MCF 10A (cell line): ENCODE measurements at regions of chr5 and their contacts with region 1.

Region 1: DNA sequence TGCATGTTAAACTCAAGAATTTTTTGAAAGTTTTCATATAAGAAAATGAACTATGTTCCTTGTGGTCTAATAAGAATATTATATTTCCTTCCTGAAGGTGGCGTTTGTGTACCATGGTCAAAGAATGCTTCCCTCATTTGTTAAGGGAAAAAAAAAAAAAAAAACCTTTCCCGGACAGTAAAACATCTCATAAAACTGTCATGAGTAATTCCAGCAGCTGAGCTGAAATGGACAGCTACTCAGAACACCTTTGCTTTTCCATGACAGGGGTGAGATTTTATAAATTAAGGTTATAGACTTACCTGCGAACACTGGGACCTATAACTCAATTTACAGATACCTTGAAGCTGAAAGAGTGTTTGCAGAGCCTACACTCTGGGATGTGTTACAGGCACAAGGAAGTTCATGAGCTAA is 113.2 kb upstream of the RANBP3L start:
- DNase-seq: peak; percentile 68
- H3K4me3 Mint-ChIP-seq: no peak overlapping the region
- H3K27ac Mint-ChIP-seq: no peak overlapping the region
- H3K4me1 Mint-ChIP-seq: peaks cover 17% of the 10 kb centered on the region
- H3K27me3 Mint-ChIP-seq: no peaks in the 10 kb centered on the region
- CTCF ChIP-seq: peak; percentile 47

Region 2: GRCh38 chr5:36444582-36445418 is 29.9 kb after region 1 on chr5:
- CTCF ChIA-PET with region 1: interaction called, 49 read pairs
- POLR2A ChIA-PET with region 1: interaction called, 81 read pairs
- intact Hi-C with region 1: no loop called
- DNase-seq: peak; percentile 73
- H3K4me3 Mint-ChIP-seq: peak overlapping the region; percentile 37
- H3K27ac Mint-ChIP-seq: peak overlapping the region; percentile 84
- H3K4me1 Mint-ChIP-seq: peaks cover 38% of the 10 kb centered on the region
- H3K27me3 Mint-ChIP-seq: no peaks in the 10 kb centered on the region
- CTCF ChIP-seq: no peak

Region 3: GRCh38 chr5:36459176-36460135 is 44.6 kb after region 1 on chr5:
- CTCF ChIA-PET with region 1: interaction called, 33 read pairs
- POLR2A ChIA-PET with region 1: interaction called, 36 read pairs
- intact Hi-C with region 1: no loop called
- DNase-seq: peak; percentile 53
- H3K4me3 Mint-ChIP-seq: no peak overlapping the region
- H3K27ac Mint-ChIP-seq: no peak overlapping the region
- H3K4me1 Mint-ChIP-seq: peaks cover 31% of the 10 kb centered on the region
- H3K27me3 Mint-ChIP-seq: no peaks in the 10 kb centered on the region
- CTCF ChIP-seq: peak; percentile 23

Region 4: DNA sequence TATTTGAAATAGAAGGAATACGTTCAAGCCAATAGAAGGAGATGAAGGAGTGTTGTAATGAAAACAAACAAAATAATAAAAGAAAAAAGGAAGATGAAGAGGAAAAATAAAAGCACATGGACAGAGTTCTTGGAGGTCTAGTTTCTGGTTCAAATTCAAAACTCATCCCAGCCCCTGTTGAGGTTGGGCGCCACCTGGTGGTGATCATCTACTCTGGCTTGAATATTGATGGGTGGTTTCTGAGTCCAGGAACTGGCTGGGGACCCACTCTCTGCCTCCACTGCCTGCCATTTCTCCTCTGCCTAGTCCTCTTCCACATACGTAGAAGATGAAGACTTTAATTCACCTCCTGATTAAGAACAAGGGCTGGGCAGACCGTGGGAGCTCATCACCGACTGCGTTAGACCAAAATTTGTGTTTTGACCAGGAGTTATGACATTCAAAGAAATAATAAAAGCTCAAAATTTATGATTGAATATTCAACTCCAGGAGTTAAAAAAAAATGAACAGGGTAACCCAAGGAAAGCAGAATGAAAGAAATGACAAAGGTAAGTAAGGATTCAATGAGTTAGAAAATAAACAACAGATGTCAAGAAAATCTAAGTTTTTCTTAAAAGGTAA is 92.6 kb after region 1 on chr5:
- CTCF ChIA-PET with region 1: interaction called, 277 read pairs
- POLR2A ChIA-PET with region 1: interaction called, 28 read pairs
- intact Hi-C with region 1: loop called (anchors 1 kb)
- DNase-seq: peak; percentile 87
- H3K4me3 Mint-ChIP-seq: no peak overlapping the region
- H3K27ac Mint-ChIP-seq: no peak overlapping the region
- H3K4me1 Mint-ChIP-seq: peaks cover 13% of the 10 kb centered on the region
- H3K27me3 Mint-ChIP-seq: no peaks in the 10 kb centered on the region
- CTCF ChIP-seq: peak; percentile 88

Region 5: DNA sequence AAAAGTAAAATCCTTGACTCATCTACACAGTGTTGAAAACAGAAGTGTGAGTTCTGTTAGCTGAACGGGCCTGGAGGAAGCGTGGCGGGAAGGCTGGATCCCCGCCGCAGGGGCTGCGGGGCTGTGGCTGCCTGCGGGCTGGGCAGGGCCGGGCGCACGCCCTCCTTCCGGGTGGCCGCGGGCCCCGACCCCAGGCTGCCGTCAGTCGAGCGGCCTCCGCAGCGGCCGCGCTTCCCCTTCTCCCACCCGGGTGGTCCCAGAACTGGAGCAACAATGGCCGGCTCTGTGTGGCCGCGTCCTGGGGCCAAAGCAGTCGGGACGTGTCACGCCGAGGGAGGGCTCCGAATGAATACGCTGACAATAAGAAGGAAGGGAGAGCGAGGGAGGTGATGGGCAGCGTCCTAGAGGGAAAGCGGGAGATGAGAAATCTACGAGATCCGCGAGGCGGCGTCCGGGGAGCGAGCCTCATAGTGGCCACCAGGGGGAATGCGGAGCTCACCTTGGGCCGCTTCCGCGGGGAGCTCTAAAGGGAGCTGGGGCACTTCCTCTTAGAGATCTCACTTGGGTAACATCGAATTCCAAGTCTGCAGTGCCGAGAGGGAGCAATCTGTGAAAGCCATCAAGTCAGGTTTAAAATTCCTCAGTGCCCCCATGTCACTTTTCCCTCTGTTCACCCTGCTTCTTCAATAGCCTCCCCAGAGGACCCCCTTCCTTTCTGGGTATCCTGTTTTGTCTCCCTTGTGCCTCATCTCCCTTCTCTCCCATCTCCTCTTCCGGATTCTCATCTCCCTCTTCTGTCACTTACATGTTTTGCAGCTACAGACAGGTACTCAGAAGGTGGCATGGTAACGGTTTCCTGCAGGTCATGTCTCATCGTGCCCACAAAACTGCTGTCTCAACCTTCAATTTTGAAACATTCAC is 275.4 kb after region 1 on chr5:
- CTCF ChIA-PET with region 1: interaction called, 252 read pairs
- POLR2A ChIA-PET with region 1: interaction called, 38 read pairs
- intact Hi-C with region 1: loop called (anchors 1 kb)
- DNase-seq: peak; percentile 89
- H3K4me3 Mint-ChIP-seq: peak overlapping the region; percentile 71
- H3K27ac Mint-ChIP-seq: peak overlapping the region; percentile 21
- H3K4me1 Mint-ChIP-seq: peaks cover 14% of the 10 kb centered on the region
- H3K27me3 Mint-ChIP-seq: no peaks in the 10 kb centered on the region
- CTCF ChIP-seq: peak; percentile 62